Endothelial cell of umbilical vein (primary cell): ENCODE measurements at regions of chr17 and their contacts with region 1.

Region 1: DNA sequence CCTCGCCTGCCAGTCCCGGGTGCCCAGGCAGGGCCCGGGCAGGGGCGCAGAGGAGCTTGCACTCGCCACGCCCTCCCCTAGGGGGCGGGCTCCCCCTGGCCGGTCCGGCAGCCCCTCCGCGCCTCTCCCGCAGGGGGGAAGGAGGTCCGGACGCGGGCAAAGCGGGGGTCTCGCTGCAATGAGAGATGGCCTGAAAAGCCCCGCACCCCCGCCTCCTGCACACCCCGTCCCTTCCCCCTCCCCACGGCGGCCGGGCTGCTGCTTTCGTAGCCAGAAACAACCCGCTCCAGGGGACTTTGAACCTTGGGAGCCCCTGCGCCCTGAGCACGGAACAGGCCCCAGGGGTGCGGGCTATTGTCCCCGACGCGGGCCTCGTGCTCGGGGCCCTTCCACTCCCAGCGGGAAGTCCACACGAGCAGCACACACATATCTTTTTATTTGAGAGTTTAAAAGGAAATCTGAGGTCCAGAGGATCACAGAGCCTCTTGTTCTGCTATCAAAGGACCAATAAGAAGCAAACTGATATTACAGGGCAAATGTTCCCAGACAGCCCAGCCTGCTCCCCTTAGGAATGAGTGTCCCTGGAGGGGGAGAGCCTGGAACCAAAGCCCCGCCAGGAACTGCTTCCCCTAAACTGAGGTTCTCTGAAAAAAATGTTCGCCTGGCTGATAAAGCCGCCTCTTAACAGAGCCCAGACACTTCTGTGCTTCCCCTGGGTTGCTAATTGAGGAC is 5.8 kb upstream of the CBX4 start:
- DNase-seq: no peak
- H3K4me3 ChIP-seq: no peak overlapping the region
- H3K27ac ChIP-seq: no peak overlapping the region
- H3K4me1 ChIP-seq: peaks cover 11% of the 10 kb centered on the region
- H3K27me3 ChIP-seq: peaks cover 37 to 48% of the 10 kb centered on the region in 2 experiments
- CTCF ChIP-seq: peak; percentile 56 to 88
- POLR2A ChIP-seq: no peak

Region 2: DNA sequence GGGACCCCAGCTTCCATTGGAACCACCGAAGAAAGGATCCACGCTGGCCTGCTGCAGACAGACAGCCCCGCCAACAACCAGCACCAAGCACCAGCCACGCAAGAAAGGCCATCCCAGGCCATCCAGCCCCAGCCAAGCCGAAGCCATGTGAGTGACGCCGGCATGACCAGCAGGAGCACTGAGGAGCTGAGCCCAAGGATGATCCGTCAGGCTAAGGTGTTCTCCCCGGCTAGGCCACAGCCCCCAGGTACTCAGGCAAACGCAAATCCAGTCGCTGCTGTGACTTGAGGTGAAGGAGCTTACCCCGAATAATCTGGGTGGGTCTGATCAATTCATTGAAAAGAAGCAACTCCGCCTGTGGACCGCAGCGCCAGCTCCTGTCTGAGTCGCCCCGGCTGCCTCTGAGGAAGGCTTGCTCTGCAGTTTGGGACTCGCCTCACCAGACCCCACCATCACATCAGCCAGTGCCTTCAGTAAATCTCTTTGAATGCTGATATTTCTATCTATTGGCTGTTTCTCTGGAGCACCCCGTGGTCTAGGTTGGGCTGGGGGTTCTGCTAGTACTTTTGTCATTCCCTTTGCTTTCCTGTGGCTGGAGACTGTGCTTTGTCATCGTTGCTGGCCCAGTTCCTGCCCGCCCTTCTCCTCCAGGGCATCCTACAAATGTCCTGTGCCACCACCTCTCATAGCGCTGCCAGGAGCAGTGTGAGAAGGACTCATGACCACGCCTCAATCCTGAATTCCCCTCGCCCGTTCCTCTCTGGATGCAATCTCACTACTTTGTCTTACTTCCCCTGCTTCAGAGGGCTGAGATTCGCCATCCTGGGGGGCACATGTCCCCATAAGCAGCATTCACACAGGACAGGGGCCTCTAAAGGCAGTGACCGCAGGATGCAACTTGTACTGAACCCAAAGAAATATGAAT is 75.2 kb before region 1 on chr17:
- CTCF ChIA-PET with region 1: no interaction called
- POLR2A ChIA-PET with region 1: no interaction called
- dilution Hi-C with region 1: no loop called
- intact Hi-C with region 1: no loop called
- DNase-seq: no peak
- H3K4me3 ChIP-seq: no peak overlapping the region
- H3K27ac ChIP-seq: no peak overlapping the region
- H3K4me1 ChIP-seq: no peaks in the 10 kb centered on the region
- H3K27me3 ChIP-seq: peaks cover 5 to 14% of the 10 kb centered on the region in 2 experiments
- CTCF ChIP-seq: no peak
- POLR2A ChIP-seq: no peak

Region 3: DNA sequence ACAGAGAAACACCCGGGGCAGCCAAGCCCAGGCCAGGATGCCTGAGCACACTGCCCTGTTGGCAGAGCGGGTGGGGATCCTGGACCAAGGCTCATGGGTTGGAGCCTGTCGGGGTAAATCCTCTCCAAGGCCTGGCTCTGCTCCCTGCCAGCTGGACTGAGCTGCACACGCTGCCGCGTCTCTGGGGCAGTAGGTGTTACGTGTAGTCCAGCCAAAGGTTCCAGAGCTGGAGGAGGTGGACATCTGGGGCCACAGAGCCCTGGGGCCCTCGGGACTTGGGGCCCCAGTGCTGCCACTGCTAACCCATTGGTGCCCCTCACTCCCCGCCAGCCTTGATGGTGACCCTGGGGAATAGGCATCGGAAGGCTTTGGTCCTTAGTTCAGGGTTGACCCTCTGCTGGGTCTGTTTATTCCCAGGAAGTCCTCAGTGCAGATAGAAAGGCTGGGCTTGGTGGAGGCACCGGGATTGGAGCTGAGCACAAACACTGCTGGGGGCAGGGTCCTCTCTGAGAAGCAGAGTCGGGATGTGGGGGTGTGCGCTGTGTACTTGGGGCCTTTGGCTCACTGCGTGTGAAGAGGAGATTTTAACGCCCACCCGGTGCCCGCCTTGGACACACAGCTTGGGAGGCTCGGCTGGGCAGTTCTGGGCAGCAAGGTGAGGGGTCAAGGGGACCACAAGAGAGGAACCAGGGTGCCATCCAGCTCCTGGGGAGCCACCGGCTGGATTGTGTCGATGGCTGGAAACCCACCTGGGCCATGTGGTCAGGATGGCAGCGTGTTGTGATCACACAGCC is 10.5 kb after region 1 on chr17:
- CTCF ChIA-PET with region 1: interaction called, 26 read pairs
- POLR2A ChIA-PET with region 1: interaction called, 4 read pairs
- dilution Hi-C with region 1: no loop called
- intact Hi-C with region 1: no loop called
- DNase-seq: no peak
- H3K4me3 ChIP-seq: no peak overlapping the region
- H3K27ac ChIP-seq: no peak overlapping the region
- H3K4me1 ChIP-seq: peaks cover 3% of the 10 kb centered on the region
- H3K27me3 ChIP-seq: no peaks in the 10 kb centered on the region
- CTCF ChIP-seq: no peak
- POLR2A ChIP-seq: no peak

Region 4: DNA sequence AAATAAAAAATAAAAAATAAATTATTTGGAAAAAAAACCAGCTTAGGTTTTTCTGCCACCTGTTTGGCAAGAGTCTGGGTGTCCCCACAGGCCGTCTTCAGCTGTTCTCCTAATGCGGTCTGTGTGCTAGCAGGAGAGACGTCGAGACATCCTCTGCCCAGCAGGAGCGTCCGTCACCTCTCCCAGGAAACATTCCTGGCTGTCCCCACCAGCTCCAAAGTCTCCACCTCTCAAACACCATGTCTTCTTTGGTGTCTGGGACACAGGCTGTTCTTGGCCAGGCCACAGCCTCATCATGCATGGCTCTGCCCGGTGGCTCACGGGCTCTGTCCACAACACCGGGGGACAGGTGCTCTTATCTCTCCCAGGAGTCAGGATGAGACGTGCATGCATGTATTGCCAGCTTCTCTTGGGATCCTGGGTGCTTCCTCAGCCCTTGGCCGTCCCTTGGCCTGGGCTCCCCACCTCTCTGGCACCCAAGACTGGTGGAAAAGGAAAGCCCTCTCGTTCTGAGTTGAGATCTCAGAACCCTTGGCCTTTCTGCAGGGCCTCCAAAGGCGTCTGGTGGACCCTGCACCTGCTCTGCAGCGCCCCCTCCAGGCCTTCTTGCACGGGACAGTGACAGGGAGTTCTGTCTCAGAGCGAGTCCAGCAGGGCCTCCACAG is 79.1 kb after region 1 on chr17:
- CTCF ChIA-PET with region 1: interaction called, 10 read pairs
- POLR2A ChIA-PET with region 1: no interaction called
- dilution Hi-C with region 1: no loop called
- intact Hi-C with region 1: no loop called
- DNase-seq: peak; percentile 28
- H3K4me3 ChIP-seq: no peak overlapping the region
- H3K27ac ChIP-seq: no peak overlapping the region
- H3K4me1 ChIP-seq: peaks cover under 1% of the 10 kb centered on the region
- H3K27me3 ChIP-seq: no peaks in the 10 kb centered on the region
- CTCF ChIP-seq: peak; percentile 49 to 63
- POLR2A ChIP-seq: no peak

Region 5: DNA sequence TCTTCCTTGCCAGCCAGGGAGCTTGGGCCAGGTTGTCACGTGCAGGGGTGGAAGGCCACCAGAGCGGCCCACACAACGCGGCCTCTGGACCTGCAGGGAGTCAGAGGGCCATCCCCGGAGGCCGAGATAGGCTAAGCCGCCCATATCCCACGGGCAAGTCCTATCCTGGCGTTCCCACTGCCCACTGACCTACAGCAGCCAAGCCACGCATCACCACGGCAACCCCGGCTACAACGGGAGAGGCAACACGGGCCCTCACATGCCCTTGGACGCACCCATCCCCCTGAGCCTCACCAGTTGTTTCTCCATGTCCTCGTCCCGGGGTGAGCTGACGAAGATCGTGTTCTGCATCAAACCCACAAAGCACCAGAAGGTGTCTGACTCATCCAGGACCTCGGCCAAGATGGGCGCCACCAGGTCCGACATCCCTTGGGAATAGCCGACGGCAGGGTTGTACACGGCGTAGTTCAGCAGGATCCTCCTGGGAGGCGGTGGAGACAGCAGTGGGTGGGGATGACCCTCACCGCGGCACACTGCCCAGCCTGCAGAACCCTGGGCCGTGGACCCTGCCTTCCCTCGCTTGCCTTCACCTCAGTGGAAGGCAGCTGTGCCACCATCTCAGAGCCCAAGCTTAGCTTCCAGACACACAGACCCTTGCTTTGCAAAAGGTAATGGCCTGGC is 102.5 kb after region 1 on chr17:
- CTCF ChIA-PET with region 1: no interaction called
- POLR2A ChIA-PET with region 1: no interaction called
- dilution Hi-C with region 1: no loop called
- intact Hi-C with region 1: no loop called
- DNase-seq: no peak
- H3K4me3 ChIP-seq: no peak overlapping the region
- H3K27ac ChIP-seq: no peak overlapping the region
- H3K4me1 ChIP-seq: no peaks in the 10 kb centered on the region
- H3K27me3 ChIP-seq: no peaks in the 10 kb centered on the region
- CTCF ChIP-seq: no peak
- POLR2A ChIP-seq: no peak

Region 6: DNA sequence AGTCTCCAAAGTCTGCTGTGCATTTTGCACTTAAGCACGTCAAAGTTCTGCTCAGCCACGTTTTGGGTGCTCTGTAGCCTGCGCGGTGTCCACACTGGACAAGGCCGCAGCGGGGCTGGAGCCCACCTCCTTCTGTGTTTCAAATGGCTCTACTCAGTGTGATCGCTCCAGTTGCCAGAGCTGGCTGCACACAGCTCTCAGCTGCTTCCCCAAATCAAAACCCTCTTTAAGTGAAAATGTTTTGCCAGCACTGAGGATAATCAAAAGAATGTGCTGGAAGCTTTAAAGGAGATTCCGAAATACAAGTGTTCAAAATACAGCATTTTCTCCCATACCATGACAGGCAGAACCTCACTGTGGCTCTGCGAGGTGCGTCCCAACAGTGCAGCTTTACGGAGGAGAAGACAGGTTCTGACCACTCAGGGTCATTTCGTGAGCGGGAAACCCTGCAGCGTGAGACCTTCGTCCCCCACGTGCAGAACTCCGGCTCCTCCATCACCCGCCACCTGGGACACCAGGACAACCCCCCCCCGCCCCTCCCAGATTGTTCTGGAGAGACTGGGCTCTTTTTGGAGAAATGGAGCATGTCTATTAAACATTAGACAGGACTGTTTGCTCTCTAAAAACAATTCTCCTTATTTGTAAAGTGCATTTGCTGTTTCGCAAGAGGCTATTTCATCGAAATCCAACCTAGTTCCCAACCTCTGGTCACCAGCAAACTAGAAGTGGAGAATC is 174.0 kb after region 1 on chr17:
- CTCF ChIA-PET with region 1: no interaction called
- POLR2A ChIA-PET with region 1: no interaction called
- dilution Hi-C with region 1: no loop called
- intact Hi-C with region 1: no loop called
- DNase-seq: no peak
- H3K4me3 ChIP-seq: no peak overlapping the region
- H3K27ac ChIP-seq: no peak overlapping the region
- H3K4me1 ChIP-seq: no peaks in the 10 kb centered on the region
- H3K27me3 ChIP-seq: no peaks in the 10 kb centered on the region
- CTCF ChIP-seq: no peak
- POLR2A ChIP-seq: no peak